K562 (cell line): ENCODE measurements at regions of chr6 and their contacts with region 1.

Region 1: GRCh38 chr6:99520855-99521632 is 5.8 kb upstream of the USP45 start:
- DNase-seq: peak; percentile 76 to 91 (median 82)
- ATAC-seq: peak; percentile 94
- H3K4me3 ChIP-seq: peak overlapping the region; percentile 76
- H3K27ac ChIP-seq: peak overlapping the region; percentile 88
- H3K4me1 ChIP-seq: peaks cover 2 to 12% of the 10 kb centered on the region in 2 experiments; a peak in 3 of 5 replicates
- H3K27me3 ChIP-seq: no peaks in the 10 kb centered on the region
- CTCF ChIP-seq: peak; percentile 80 to 86 (median 82)
- EP300 ChIP-seq: no peak
- POLR2A ChIP-seq: peak; percentile 97
- RAD21 ChIP-seq: peak; percentile 40 to 58

Region 2: GRCh38 chr6:99543968-99544367 is 22.9 kb after region 1 on chr6:
- CTCF ChIA-PET with region 1: no interaction called
- POLR2A ChIA-PET with region 1: interaction called, 10 read pairs
- in situ Hi-C with region 1: no loop called
- intact Hi-C with region 1: no loop called
- DNase-seq: peak in 2 of 4 experiments; percentile 23 to 25
- ATAC-seq: peak; percentile 46; the same call in 1 of the 3 replicates
- H3K4me3 ChIP-seq: no peak overlapping the region
- H3K27ac ChIP-seq: no peak overlapping the region
- H3K4me1 ChIP-seq: no peaks in the 10 kb centered on the region
- H3K27me3 ChIP-seq: no peaks in the 10 kb centered on the region
- CTCF ChIP-seq: no peak
- EP300 ChIP-seq: no peak
- POLR2A ChIP-seq: no peak
- RAD21 ChIP-seq: no peak

Region 3: DNA sequence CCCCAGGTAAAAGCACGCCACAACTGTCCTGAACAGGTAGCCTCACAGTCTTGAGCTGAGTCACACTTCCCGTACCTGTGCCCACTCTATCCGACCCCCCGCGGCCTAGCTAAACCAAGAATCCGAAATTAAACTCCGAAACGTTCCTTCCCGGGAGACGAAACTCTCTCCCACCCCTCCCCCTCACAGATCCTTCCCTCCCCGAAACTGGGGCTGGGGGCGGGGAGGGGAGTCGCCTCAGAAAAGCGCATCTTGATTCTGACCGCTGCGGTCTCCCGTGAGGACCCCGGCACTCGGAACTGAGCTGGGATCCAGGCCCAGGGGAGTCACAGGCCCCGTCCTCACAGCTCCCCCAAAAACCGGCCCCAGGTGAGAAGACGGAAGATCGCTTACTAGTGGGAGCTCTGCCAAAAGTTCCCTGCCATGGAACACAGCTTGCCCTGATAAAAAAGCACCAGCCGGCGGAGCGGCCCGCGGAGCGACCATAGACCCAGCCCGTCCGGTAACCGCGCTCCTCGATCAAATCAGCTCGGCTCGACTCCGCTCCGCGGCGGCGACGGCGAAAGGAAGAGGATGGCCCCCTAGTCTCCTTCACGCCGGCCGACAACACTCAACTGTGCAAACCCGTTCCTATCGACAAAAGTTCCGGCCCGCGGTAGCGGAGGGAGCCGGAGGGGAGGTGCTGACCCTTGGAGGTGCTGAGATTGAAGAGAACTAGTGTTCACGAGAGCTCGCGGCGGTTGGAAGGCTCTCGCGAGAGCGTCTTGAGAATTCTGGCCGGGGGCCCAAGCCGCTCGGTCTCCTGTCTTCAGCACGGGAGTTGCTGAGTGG is 47.3 kb after region 1 on chr6 and contains the start of gene CCNC:
- CTCF ChIA-PET with region 1: interaction called, 3 read pairs
- POLR2A ChIA-PET with region 1: interaction called, 5 read pairs
- in situ Hi-C with region 1: no loop called
- intact Hi-C with region 1: loop called (anchors 2 kb)
- DNase-seq: peak; percentile 84 to 93 (median 88)
- ATAC-seq: peak; percentile 96
- H3K4me3 ChIP-seq: peak within 1 kb of the TSS; percentile 91
- H3K27ac ChIP-seq: peak within 1 kb of the TSS; percentile 90
- H3K4me1 ChIP-seq: peaks cover 0 to 11% of the 10 kb centered on the region in 2 experiments; a peak in 1 of 5 replicates
- H3K27me3 ChIP-seq: no peaks in the 10 kb centered on the region
- CTCF ChIP-seq: peak in 1 of 3 experiments; percentile 26; a peak in 1 of 6 replicates
- EP300 ChIP-seq: peak; percentile 54; the same call in 1 of the 2 replicates
- POLR2A ChIP-seq: peak; percentile 93
- RAD21 ChIP-seq: peak in 1 of 2 experiments; percentile 20; a peak in 2 of 4 replicates
- polyA plus RNA-seq, gene CCNC: 133 to 177 TPM